Activated CD4-positive, alpha-beta T cell treated with anti-CD3 and anti-CD28 coated beads for 36 hours (primary cell): ENCODE measurements at regions of chr17 and their contacts with region 1.

Region 1: DNA sequence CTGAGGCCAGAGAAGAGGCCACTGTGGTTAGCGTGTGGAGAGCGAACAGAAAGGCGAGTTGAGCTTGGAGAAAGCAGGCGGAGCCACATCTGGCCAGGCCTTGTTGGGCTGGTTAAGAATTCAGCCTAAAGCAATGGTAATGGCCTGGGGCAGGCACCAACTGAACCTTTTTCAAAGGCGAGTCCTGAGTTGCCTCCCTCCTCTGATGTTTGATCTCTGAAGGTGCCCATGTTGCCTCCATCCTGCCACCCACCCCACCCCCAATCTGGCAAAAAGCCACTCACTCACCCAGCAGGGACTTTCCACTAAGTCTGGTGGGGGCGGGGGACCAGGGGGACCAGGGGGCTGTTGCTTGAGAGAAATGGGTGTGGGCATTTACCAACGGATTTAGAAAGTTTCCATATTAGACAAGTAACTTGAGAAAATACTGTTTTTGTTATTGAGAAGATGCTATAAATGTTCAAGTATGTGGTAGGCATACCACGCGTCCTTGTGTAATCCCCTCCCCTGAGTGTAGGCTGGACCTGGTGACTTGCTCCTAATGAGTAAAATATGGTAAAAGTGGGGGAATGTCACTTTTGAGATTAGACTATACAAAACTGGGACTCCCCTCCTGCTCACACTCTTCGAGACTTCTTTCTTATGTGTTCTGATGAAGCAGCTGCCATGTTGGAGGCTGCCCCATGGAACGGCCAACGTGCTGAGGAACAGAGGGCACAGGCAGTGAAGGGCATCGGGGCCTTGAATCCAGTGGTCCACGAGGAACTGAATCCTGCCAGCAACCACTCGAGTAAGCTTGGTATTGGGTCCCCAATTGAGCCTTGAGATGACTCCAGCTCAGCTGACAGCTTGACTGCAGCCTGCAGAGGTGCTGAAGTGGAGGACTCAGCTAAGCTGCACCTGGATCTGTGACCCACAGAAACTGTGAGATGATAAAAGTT is 29.9 kb upstream of the TNS4 start:
- DNase-seq: peak; percentile 95
- ATAC-seq: peak; percentile 81
- H3K4me3 Mint-ChIP-seq: peak overlapping the region; percentile 60
- H3K27ac Mint-ChIP-seq: peak overlapping the region; percentile 92
- H3K4me1 Mint-ChIP-seq: peaks cover 75% of the 10 kb centered on the region
- H3K27me3 Mint-ChIP-seq: no peaks in the 10 kb centered on the region

Region 2: GRCh38 chr17:40399185-40399584 is 132.1 kb before region 1 on chr17:
- CTCF ChIA-PET with region 1: interaction called, 56 read pairs
- POLR2A ChIA-PET with region 1: no interaction called
- intact Hi-C with region 1: loop called (anchors 1 kb)
- DNase-seq: no peak
- ATAC-seq: peak; percentile 47
- H3K4me3 Mint-ChIP-seq: no peak overlapping the region
- H3K27ac Mint-ChIP-seq: no peak overlapping the region
- H3K4me1 Mint-ChIP-seq: peaks cover 12% of the 10 kb centered on the region
- H3K27me3 Mint-ChIP-seq: no peaks in the 10 kb centered on the region

Region 3: GRCh38 chr17:40417609-40418427 is 113.5 kb before region 1 on chr17 and contains the start of gene TOP2A:
- CTCF ChIA-PET with region 1: interaction called, 124 read pairs
- POLR2A ChIA-PET with region 1: interaction called, 41 read pairs
- intact Hi-C with region 1: loop called (anchors 1 to 2 kb)
- DNase-seq: peak; percentile 95
- ATAC-seq: peak; percentile 99
- H3K4me3 Mint-ChIP-seq: peak within 1 kb of the TSS; percentile 86
- H3K27ac Mint-ChIP-seq: peak within 1 kb of the TSS; percentile 89
- H3K4me1 Mint-ChIP-seq: peaks cover 24% of the 10 kb centered on the region
- H3K27me3 Mint-ChIP-seq: no peaks in the 10 kb centered on the region
- total RNA-seq, gene TOP2A: 245 to 322 TPM

Region 4: GRCh38 chr17:40437095-40437732 is 94.1 kb before region 1 on chr17:
- CTCF ChIA-PET with region 1: interaction called, 15 read pairs
- POLR2A ChIA-PET with region 1: no interaction called
- intact Hi-C with region 1: no loop called
- DNase-seq: no peak
- ATAC-seq: no peak
- H3K4me3 Mint-ChIP-seq: no peak overlapping the region
- H3K27ac Mint-ChIP-seq: no peak overlapping the region
- H3K4me1 Mint-ChIP-seq: peaks cover 9% of the 10 kb centered on the region
- H3K27me3 Mint-ChIP-seq: no peaks in the 10 kb centered on the region

Region 5: DNA sequence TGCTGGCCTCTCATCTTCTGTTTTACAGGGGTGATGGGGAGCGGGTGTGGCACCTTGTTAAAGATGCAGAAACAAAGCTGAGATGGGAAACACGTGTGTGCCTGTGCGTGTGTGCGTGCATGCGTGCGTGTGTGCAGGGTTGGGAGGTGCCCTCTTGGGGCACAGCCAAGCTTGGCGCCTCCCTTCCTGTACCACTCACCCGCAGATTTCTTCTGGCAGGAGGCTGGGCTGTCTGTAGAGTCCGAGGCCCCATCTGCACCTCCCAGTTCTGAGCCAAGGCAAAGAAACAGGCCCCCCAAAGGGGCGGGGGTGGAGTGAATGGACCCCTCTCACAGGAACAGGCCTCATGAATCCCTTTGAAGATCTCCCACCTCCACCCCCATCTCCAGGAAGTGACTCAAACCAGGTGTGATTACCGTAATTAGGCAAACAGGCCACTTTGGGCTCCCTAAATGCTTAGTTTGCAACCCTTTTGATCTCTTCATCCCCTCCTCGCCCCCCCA is 50.8 kb before region 1 on chr17:
- CTCF ChIA-PET with region 1: interaction called, 43 read pairs
- POLR2A ChIA-PET with region 1: interaction called, 8 read pairs
- intact Hi-C with region 1: loop called (anchors 1 kb)
- DNase-seq: peak; percentile 95
- ATAC-seq: peak; percentile 94
- H3K4me3 Mint-ChIP-seq: peak overlapping the region; percentile 60
- H3K27ac Mint-ChIP-seq: peak overlapping the region; percentile 96
- H3K4me1 Mint-ChIP-seq: peaks cover 70% of the 10 kb centered on the region
- H3K27me3 Mint-ChIP-seq: no peaks in the 10 kb centered on the region

Region 6: DNA sequence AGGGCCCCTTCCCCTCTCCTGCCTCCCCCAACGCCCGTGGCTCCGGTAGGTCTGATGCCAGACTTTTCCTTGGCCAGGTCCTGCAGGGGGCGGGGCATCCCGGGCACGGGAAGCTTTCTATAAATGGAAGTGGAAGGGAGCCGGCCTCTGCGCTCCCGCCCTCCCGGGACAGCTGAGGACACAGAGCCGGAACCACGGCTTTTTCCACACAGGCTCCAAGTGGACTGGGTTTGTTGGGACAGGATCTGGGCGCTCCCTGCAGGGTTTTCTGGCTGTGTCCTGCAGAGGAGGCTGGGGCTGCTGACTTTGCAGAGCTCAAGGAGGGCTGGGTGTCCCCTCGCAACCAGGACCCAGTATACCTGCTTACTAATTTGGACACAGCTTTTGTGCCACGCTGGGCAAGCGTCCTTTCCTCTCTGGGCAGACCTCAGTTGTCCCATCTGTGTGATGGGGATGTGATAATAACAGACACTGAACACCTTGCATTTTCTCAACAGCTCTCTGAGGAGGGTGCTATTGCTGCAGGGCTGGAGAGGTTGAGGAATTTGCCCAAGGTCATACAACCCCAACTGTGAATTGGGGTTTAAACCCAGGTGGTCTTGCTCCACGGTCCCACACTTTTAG is 31.7 kb before region 1 on chr17:
- CTCF ChIA-PET with region 1: interaction called, 10 read pairs
- POLR2A ChIA-PET with region 1: interaction called, 4 read pairs
- intact Hi-C with region 1: no loop called
- DNase-seq: no peak
- ATAC-seq: no peak
- H3K4me3 Mint-ChIP-seq: no peak overlapping the region
- H3K27ac Mint-ChIP-seq: no peak overlapping the region
- H3K4me1 Mint-ChIP-seq: peaks cover 2% of the 10 kb centered on the region
- H3K27me3 Mint-ChIP-seq: peaks cover 4% of the 10 kb centered on the region

Region 7: DNA sequence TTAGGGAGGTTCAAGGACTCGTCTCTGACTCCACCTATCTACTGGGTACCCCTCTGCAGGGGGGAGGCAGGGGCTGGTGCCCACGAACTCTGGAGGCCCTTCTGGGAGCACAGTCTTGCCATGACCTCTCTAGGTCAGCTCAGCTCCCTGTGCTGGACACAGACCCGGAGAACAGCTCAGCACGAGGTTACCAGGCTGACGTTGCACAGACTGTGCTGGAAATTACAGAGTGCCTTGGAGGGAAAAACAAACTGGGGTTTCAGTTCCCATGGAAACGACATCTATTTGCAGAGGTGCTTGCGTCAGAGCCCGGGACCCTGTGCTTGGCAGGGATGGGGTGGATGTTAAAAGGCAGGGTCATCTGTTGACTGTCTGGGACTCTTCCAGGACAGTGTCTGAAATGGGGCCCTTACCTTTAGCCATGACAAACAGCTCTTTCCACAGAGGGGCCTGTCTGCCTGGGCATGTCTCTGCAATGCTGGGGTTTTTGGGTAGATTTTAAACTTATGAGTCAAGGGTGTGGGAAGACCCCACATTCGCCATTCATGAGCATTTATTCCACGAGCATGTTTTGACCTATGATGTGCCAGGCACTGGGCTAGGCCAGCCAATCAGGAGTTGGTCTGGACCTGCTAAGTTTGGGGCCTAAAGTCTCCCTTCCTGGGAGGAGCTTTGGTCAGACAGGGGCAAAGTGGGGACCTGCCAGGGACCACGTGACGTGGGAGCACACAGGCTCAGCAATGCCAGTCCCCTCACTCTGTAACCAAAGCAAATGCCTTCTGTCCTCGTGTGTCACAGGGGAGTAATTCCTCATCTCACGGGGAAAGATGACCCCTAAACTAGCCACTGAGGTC is 11.5 kb after region 1 on chr17:
- CTCF ChIA-PET with region 1: interaction called, 403 read pairs
- POLR2A ChIA-PET with region 1: interaction called, 16 read pairs
- intact Hi-C with region 1: loop called in 1 of 2 experiments (anchors 1 kb)
- DNase-seq: peak; percentile 76
- ATAC-seq: peak; percentile 52
- H3K4me3 Mint-ChIP-seq: peak overlapping the region; percentile 63
- H3K27ac Mint-ChIP-seq: peak overlapping the region; percentile 98
- H3K4me1 Mint-ChIP-seq: peaks cover 88% of the 10 kb centered on the region
- H3K27me3 Mint-ChIP-seq: no peaks in the 10 kb centered on the region

Region 8: DNA sequence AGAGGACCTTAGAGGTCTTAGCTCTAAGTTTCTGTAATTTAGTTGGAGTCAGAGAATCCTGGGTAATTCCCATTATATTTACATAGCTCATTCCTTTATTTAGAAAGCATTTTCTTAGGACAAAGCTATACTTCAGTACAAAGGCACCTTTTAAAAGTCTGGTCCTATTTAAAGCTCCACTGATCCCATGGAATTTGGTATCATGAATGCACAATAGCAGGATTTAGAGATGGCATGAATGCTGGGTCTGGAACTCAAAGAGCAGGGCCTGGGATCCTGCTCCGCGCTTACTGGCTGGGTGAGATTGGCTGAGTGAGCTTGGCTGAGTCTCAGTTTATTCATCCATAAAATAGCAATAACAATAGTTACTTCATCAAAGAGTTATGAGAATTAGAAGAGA is 401.3 kb after region 1 on chr17:
- CTCF ChIA-PET with region 1: no interaction called
- POLR2A ChIA-PET with region 1: no interaction called
- intact Hi-C with region 1: no loop called
- DNase-seq: no peak
- ATAC-seq: no peak
- H3K4me3 Mint-ChIP-seq: no peak overlapping the region
- H3K27ac Mint-ChIP-seq: no peak overlapping the region
- H3K4me1 Mint-ChIP-seq: peaks cover 3% of the 10 kb centered on the region
- H3K27me3 Mint-ChIP-seq: peaks cover 15% of the 10 kb centered on the region